IMR-90 (cell line): ENCODE measurements at regions of chr5 and their contacts with region 1.

Region 1: DNA sequence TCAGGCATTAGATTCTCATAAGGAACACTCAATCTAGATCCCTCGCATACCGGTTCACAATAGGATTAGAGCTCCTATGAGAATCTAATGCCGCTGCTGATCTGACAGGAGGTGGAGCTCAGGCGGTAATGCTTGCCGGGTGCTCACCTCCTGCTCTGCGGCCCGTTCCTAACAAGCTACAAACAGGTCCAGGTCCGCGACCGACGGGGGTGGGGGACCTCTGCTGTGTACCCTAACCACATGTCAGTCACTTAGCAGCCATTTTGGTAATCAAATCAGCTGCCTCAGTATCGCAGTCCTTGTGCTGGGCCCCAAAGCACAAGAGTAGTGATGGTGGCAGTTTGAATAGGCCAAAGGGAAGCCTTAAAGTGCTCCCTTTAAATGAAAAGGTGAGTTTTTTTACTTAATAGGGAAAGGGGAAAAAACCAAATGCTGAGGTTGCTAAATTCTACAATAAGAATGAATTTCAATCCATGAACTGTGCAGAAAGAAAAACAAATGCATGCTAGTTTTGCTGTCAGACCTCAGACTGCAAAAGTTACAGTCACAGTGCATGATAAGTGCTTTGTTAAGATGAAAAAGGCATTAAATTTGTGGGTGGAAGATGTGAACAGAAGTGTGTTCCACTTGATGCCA is 67.0 kb upstream of the TNPO1 start:
- DNase-seq: no peak
- ATAC-seq: no peak
- H3K4me3 ChIP-seq: no peak overlapping the region
- H3K27ac ChIP-seq: no peak overlapping the region
- H3K4me1 ChIP-seq: no peaks in the 10 kb centered on the region
- H3K27me3 ChIP-seq: peaks cover 2% of the 10 kb centered on the region
- CTCF ChIP-seq: no peak
- POLR2A ChIP-seq: no peak
- RAD21 ChIP-seq: no peak

Region 2: DNA sequence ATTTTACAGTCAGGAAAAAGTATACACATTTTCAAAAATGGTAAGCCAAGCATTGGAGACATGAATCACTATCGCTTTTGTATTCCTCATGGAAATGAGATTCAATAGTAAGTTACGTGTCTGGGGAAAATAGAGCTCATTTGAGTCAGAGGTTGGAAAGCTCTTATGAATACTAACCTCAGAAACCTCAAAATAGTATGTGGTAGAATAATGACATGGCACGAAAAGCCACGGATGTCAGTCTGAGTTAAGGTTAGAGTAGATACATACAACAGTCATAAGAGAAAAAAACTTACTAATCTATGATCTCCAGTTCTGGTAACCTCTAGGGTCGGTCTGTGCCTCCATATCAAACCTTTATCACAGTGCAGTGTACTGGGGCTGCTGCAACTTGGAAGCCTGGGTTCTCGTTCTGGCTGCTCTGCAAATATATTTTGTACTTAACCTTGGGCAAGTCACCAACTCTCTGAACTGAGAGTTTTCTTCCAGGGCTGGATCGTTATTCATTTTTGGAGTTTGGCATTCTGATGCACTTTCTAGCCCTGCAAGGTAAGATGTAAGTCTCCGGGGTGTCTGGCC is 610.4 kb before region 1 on chr5:
- CTCF ChIA-PET with region 1: no interaction called
- POLR2A ChIA-PET with region 1: no interaction called
- dilution Hi-C with region 1: no loop called
- in situ Hi-C with region 1: no loop called
- intact Hi-C with region 1: no loop called
- DNase-seq: peak; percentile 97
- ATAC-seq: peak; percentile 38
- H3K4me3 ChIP-seq: no peak overlapping the region
- H3K27ac ChIP-seq: peak overlapping the region; percentile 83
- H3K4me1 ChIP-seq: peaks cover 19% of the 10 kb centered on the region
- H3K27me3 ChIP-seq: no peaks in the 10 kb centered on the region
- CTCF ChIP-seq: no peak
- POLR2A ChIP-seq: no peak
- RAD21 ChIP-seq: no peak

Region 3: DNA sequence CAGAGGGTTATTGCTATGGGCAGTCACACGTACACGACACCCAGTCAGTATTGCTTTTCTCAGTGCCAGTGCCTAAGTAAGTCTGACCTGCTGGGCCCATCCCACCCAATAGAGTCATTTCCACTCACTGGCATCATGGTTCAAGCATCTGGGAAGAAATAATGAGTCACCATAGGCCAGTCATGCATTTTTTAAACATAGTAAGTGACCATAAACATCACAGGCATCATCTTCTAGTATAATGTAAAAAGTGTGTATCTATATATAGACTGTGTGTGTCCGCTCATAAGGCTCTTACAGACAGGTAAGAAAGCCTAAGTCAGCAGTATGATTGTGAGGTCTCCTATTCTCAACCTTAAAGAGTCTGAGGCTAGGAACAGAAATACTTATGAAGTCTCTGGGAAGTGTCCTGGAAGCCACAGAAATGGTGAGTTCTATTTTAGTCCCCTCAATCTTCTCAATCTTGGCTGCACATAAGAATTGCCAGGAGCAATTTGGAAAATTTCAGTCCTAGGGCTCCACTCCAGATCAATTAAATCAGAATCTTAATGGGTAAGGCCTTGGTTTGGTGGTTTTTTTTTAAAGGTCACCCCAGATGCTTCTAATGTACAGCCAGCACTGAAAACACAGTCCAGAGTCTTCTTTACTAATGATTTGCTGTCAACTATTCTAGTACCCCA is 307.5 kb before region 1 on chr5:
- CTCF ChIA-PET with region 1: no interaction called
- POLR2A ChIA-PET with region 1: no interaction called
- dilution Hi-C with region 1: no loop called
- in situ Hi-C with region 1: no loop called
- intact Hi-C with region 1: no loop called
- DNase-seq: peak; percentile 97
- ATAC-seq: peak; percentile 92
- H3K4me3 ChIP-seq: no peak overlapping the region
- H3K27ac ChIP-seq: peak overlapping the region; percentile 51; the same call in 1 of the 2 replicates
- H3K4me1 ChIP-seq: peaks cover 7% of the 10 kb centered on the region
- H3K27me3 ChIP-seq: no peaks in the 10 kb centered on the region
- CTCF ChIP-seq: no peak
- POLR2A ChIP-seq: no peak
- RAD21 ChIP-seq: no peak

Region 4: DNA sequence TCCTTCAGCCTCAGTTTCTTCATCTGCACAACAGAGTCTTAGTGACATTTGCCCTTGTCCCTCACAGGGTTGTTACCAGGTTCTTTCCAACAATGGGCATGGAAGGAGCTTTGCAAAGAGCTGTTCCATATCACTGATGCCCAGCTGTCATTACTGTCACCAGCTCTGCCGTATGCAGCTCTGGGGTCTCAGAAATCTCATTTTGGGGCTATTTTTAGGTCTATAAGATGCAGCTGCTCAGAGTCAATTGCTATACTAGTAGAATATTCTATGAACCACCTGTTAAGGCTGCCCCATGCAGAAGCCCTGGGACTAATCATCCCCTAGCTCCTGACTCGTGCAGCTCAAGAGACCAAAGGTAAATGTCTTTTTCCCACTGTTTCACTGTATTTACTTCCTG is 38.1 kb before region 1 on chr5:
- CTCF ChIA-PET with region 1: no interaction called
- POLR2A ChIA-PET with region 1: no interaction called
- dilution Hi-C with region 1: no loop called
- in situ Hi-C with region 1: no loop called
- intact Hi-C with region 1: loop called (anchors 5 kb)
- DNase-seq: no peak
- ATAC-seq: no peak
- H3K4me3 ChIP-seq: no peak overlapping the region
- H3K27ac ChIP-seq: no peak overlapping the region
- H3K4me1 ChIP-seq: no peaks in the 10 kb centered on the region
- H3K27me3 ChIP-seq: peaks cover 36% of the 10 kb centered on the region
- CTCF ChIP-seq: no peak
- POLR2A ChIP-seq: no peak
- RAD21 ChIP-seq: no peak

Region 5: DNA sequence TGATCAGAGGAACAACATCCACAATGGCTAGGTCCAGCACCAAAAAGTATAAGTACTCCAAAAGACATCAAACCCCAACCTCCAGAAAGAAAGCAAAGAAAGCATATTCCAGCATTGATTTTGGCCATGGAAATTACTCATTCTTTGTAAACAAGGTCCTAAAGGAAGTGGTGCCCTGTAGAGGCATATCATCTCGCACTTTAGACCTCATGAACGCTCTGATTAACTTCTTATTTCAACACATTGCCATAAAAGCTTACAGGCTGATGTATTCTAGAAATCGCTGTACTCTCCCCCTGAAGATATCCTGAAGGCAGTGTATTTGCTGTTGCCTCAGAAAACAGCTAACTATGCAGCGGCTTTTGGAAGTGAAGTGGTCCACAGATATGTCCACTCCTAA is 15.7 kb before region 1 on chr5:
- CTCF ChIA-PET with region 1: no interaction called
- POLR2A ChIA-PET with region 1: no interaction called
- dilution Hi-C with region 1: no loop called
- in situ Hi-C with region 1: no loop called
- intact Hi-C with region 1: no loop called
- DNase-seq: no peak
- ATAC-seq: no peak
- H3K4me3 ChIP-seq: no peak overlapping the region
- H3K27ac ChIP-seq: no peak overlapping the region
- H3K4me1 ChIP-seq: no peaks in the 10 kb centered on the region
- H3K27me3 ChIP-seq: no peaks in the 10 kb centered on the region
- CTCF ChIP-seq: no peak
- POLR2A ChIP-seq: no peak
- RAD21 ChIP-seq: no peak